AG04450 (cell line): ENCODE measurements at regions of chr13 and their contacts with region 1.

Region 1: DNA sequence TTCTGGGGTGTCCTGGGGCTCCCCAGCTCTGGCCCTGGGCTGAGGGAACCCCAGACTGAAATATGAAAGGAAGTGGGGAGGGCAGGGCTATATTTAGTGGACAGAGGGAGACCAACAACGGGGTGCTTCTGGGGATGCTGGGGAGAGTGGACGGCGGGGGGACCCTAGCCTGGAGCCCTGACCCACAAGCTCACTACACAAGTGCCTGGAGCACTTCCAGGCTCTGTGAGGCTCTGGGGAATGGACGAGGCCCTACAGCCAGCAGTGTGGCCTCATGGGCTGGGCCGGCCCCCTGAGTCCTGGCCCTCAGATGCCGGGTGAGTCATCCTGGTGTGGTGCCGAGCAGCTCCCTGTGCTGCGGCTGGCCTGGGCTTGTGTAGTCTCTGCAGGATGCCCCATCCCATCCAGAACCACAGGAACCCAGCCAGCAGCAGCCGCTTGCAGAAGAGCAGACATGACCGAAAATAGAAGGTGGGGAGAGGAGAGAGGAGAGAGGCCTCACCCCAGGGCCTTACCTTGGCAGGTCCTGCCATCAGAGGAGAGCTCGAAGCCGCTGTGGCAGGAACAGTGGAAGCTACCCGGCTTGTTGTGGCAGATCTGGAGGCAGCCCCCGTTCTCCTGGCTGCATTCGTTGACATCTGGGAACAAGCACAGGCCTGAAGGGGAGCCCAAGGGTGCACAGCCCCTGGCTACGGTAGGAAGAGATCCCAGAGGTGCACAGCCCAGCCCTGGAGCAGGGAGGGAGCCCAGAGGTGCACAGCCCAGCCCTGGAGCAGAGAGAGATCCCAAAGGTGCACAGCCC is 26.1 kb downstream of the GAS6 start:
- DNase-seq: peak; percentile 97
- H3K4me3 ChIP-seq: peak overlapping the region; percentile 63
- H3K27ac ChIP-seq: peak overlapping the region; percentile 100
- H3K27me3 ChIP-seq: no peaks in the 10 kb centered on the region
- CTCF ChIP-seq: no peak

Region 2: GRCh38 chr13:113528101-113528812 is 309.5 kb before region 1 on chr13:
- CTCF ChIA-PET with region 1: no interaction called
- POLR2A ChIA-PET with region 1: no interaction called
- DNase-seq: no peak
- H3K4me3 ChIP-seq: no peak overlapping the region
- H3K27ac ChIP-seq: no peak overlapping the region
- H3K27me3 ChIP-seq: no peaks in the 10 kb centered on the region
- CTCF ChIP-seq: no peak

Region 3: GRCh38 chr13:113820813-113821651 is 16.7 kb before region 1 on chr13:
- CTCF ChIA-PET with region 1: no interaction called
- POLR2A ChIA-PET with region 1: interaction called, 18 read pairs
- DNase-seq: peak; percentile 97
- H3K4me3 ChIP-seq: peak overlapping the region; percentile 22; the same call in 1 of the 2 replicates
- H3K27ac ChIP-seq: peak overlapping the region; percentile 89
- H3K27me3 ChIP-seq: no peaks in the 10 kb centered on the region
- CTCF ChIP-seq: no peak

Region 4: DNA sequence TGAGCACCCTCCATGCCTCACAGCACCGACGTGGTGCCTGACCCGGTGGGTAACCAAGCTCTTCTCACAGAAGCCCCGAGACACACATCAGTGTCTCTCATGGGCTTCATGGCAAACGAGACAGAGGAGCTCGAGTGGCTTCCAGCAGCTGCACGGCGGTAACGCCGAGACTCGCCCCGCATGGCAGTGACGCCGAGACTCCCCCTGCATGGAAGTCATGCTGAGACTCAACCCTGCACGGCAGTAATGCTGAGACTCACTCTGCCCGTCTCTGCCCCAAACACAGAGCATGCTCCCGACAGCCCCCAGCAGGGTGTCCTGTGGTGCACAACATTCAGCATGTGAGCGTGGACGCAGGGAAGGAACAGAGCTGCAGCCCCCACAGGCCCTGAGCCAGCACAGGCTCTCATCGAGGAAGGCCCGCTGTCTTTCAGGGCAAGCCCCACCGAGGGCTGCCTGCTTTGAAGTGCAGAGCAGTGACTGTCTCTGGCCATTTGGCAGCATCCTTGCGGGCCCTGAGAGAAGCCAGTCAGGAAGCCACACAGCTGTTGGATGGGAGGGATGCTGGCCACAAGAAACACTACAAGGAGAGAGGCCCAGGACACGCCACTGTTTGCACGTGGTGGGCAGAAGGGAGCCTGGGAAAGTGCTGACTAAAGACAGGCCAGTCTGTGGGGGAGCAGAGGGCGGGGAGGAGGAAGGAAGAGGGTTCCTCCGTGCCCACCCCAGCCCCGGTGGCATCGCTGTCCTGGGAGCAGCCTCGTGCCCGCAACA is 16.7 kb after region 1 on chr13:
- CTCF ChIA-PET with region 1: no interaction called
- POLR2A ChIA-PET with region 1: interaction called, 18 read pairs
- DNase-seq: no peak
- H3K4me3 ChIP-seq: no peak overlapping the region
- H3K27ac ChIP-seq: peak overlapping the region; percentile 58
- H3K27me3 ChIP-seq: no peaks in the 10 kb centered on the region
- CTCF ChIP-seq: no peak

Region 5: GRCh38 chr13:113881614-113882266 is 44.0 kb after region 1 on chr13:
- CTCF ChIA-PET with region 1: no interaction called
- POLR2A ChIA-PET with region 1: no interaction called
- DNase-seq: no peak
- H3K4me3 ChIP-seq: no peak overlapping the region
- H3K27ac ChIP-seq: no peak overlapping the region
- H3K27me3 ChIP-seq: no peaks in the 10 kb centered on the region
- CTCF ChIP-seq: no peak

Region 6: GRCh38 chr13:114078461-114079451 is 241.0 kb after region 1 on chr13:
- CTCF ChIA-PET with region 1: no interaction called
- POLR2A ChIA-PET with region 1: no interaction called
- DNase-seq: no peak
- H3K4me3 ChIP-seq: no peak overlapping the region
- H3K27ac ChIP-seq: peak overlapping the region; percentile 47
- H3K27me3 ChIP-seq: no peaks in the 10 kb centered on the region
- CTCF ChIP-seq: no peak